ENCODE measurements at regions of chr5 and their contacts with region 1.

Region 1: DNA sequence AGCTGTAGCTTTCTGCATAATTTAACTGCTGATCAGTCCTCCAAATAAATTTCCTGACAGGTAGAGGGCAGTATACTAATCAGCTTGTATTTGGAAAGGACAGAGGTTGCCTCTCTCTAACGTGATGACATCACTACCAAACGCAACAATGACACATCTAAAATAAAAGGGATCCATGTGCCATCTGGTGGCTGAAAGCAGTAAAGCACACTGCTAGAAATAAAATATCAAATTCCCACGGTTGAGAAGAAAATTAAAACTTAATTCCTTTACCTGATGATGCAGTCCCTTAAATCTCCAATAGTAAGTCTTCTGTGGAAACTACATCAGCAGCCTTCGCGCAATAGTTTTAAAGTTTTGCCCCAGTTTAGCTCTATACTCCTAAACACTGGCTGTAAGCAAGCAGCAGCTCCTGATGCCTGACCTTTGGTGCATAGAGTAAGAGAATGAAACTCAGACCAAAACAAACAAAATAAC is 54.5 kb downstream of the DIAPH1 start:
- DNase-seq: peak; percentile 68
- H3K4me3 Mint-ChIP-seq: no peak overlapping the region
- H3K27ac Mint-ChIP-seq: peak overlapping the region; percentile 79
- H3K4me1 Mint-ChIP-seq: peaks cover 40% of the 10 kb centered on the region
- H3K27me3 Mint-ChIP-seq: no peaks in the 10 kb centered on the region

Region 2: GRCh38 chr5:141343953-141344463 is 220.2 kb before region 1 on chr5:
- CTCF ChIA-PET with region 1: no interaction called
- POLR2A ChIA-PET with region 1: no interaction called
- DNase-seq: no peak
- H3K4me3 Mint-ChIP-seq: peak overlapping the region; percentile 44
- H3K27ac Mint-ChIP-seq: no peak overlapping the region
- H3K4me1 Mint-ChIP-seq: no peaks in the 10 kb centered on the region
- H3K27me3 Mint-ChIP-seq: peaks cover 5% of the 10 kb centered on the region

Region 3: DNA sequence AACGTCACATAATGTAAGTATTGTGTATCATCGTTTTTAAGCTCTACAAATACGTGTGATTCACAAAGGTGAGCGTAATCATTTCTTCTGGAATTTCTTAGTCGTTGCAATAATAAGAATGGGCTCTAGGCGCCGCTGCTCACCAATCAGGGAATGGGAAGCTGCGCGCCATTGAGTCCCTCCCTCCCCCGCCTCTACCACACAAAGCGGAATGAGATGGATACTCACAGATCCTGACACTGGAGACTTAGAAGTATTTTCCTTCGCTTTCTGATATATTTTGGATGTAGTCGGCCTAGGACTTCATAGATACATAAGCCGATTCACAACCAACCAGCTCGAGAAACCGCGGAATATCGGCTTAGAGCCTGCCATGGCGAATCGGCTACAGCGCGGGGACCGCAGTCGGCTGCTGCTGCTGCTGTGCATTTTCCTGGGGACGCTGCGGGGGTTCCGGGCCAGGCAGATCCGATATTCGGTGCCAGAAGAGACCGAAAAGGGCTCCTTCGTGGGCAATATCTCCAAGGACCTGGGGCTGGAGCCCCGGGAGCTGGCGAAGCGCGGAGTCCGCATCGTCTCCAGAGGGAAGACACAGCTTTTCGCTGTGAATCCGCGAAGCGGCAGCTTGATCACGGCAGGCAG is 143.3 kb before region 1 on chr5 and contains the start of gene PCDHGA11:
- CTCF ChIA-PET with region 1: interaction called, 12 read pairs
- POLR2A ChIA-PET with region 1: no interaction called
- DNase-seq: peak; percentile 46
- H3K4me3 Mint-ChIP-seq: peak within 1 kb of the TSS; percentile 70
- H3K27ac Mint-ChIP-seq: peak within 1 kb of the TSS; percentile 5
- H3K4me1 Mint-ChIP-seq: peaks cover 12% of the 10 kb centered on the region
- H3K27me3 Mint-ChIP-seq: peaks cover 64% of the 10 kb centered on the region
- total RNA-seq, gene PCDHGA11: not detected

Region 4: DNA sequence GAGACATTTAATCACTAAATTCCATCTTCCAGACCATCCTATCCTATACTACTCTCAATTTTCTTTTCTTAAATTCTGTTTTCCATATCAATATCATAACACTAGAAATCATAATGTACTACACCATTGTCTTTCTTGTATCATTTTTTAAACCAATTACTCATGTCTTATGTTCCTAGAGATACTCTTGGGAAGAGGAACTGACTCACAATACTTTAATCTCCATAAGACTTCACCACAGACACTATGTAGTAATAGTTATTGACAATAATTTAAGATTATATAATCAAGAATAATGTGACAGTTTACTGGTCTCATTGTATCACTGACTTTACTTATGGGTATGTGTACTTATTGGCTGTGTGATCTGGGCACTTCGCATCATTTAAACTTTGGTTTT is 31.5 kb before region 1 on chr5:
- CTCF ChIA-PET with region 1: interaction called, 10 read pairs
- POLR2A ChIA-PET with region 1: interaction called, 3 read pairs
- DNase-seq: no peak
- H3K4me3 Mint-ChIP-seq: no peak overlapping the region
- H3K27ac Mint-ChIP-seq: no peak overlapping the region
- H3K4me1 Mint-ChIP-seq: no peaks in the 10 kb centered on the region
- H3K27me3 Mint-ChIP-seq: no peaks in the 10 kb centered on the region

Region 5: DNA sequence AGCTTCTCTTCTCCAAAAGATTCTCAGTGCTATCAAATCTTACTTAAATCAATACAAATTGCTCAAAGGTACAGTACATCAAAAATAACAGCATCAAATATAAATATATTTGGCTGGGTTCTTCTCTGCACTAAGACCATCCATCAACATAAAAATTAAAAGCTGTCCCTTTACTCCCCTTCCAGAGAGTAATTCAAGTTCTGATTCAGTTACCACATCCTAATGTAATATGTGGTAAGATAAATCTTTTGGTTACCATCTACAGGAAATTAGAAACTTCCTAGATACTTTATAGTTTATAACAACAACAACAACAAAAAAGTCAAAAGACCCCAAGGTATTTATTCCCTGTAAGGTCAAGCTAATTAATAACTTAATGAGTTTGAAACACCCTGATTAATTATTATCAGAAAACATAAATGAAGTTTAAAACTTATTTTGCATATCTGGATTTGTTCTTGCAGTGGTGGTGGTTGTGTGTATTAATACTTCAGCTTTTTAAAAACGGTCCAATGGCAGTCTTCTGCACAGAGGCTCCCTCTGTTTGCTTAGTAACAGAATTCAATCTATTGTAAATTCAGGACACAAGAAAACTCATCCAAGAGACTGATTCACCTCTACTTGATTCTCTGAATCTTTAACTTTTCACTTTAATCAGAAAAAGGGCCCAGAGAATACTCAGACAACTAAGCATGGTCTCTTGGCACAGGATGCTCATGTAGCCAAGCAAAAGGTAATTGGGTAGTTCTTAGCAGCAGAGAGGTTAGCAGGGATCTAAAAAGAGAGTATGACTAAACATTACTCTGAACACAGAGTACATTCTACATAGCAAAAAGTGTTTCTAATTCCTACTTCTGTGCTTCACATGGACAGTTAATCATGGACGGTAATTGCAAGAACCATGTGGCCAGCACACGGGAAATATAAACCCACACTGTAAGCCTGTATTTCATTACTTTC is 34.4 kb after region 1 on chr5:
- CTCF ChIA-PET with region 1: interaction called, 26 read pairs
- POLR2A ChIA-PET with region 1: interaction called, 3 read pairs
- DNase-seq: no peak
- H3K4me3 Mint-ChIP-seq: no peak overlapping the region
- H3K27ac Mint-ChIP-seq: peak overlapping the region; percentile 73
- H3K4me1 Mint-ChIP-seq: peaks cover 75% of the 10 kb centered on the region
- H3K27me3 Mint-ChIP-seq: no peaks in the 10 kb centered on the region

Region 6: DNA sequence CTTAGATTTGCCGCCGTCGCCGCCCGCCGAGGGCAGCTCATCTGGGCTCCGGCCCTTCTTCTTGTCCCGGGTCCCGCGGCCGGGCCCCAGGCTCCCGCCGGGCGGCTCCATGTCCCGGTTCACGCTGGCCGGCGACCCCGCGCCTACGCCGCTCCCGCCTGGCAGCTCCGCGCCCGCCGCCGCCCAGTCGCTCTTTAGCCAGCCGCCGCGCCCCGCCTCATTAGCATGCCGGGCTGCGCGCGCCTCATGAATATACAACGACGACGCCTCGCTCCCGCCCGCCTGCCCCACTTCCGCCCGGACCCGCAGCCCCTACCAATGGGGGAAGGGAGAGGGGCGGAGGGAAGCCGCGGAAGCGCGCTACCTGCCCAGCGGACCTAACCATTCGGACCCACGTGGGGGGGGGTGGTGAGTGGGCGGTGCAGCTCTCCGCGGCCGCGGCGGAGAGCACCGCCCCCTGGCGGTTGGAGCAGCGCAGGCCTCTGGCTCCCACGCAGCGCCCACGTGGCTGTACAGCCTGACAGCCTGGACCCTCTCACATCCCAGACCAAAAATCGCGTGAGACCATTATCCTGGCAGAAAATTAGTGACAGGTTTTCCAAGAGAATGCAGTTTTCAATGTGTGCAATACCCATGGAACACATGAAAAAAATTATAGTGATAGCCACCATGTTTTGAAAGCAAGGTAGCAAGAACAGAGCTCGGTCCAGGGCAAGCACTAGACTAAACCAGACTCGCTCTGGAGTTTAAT is 54.7 kb after region 1 on chr5 and contains the start of gene DIAPH1:
- CTCF ChIA-PET with region 1: interaction called, 26 read pairs
- POLR2A ChIA-PET with region 1: interaction called, 7 read pairs
- DNase-seq: peak; percentile 98
- H3K4me3 Mint-ChIP-seq: peak within 1 kb of the TSS; percentile 100
- H3K27ac Mint-ChIP-seq: peak within 1 kb of the TSS; percentile 92
- H3K4me1 Mint-ChIP-seq: peaks cover 53% of the 10 kb centered on the region
- H3K27me3 Mint-ChIP-seq: no peaks in the 10 kb centered on the region
- total RNA-seq, gene DIAPH1: 317 to 323 TPM

Region 7: GRCh38 chr5:142095651-142096330 is 531.5 kb after region 1 on chr5:
- CTCF ChIA-PET with region 1: no interaction called
- POLR2A ChIA-PET with region 1: no interaction called
- DNase-seq: peak; percentile 87
- H3K4me3 Mint-ChIP-seq: peak overlapping the region; percentile 7
- H3K27ac Mint-ChIP-seq: peak overlapping the region; percentile 89
- H3K4me1 Mint-ChIP-seq: peaks cover 37% of the 10 kb centered on the region
- H3K27me3 Mint-ChIP-seq: no peaks in the 10 kb centered on the region

Measured in activated CD4-positive, alpha-beta memory T cell treated with anti-CD3 and anti-CD28 coated beads, Interleukin-2, amount 10 ng/mL, durations not matched to agents 7 days and 5 days (primary cell).